SK-N-SH (cell line): ENCODE measurements at regions of chr1 and their contacts with region 1.

Region 1: GRCh38 chr1:119613769-119614720 is 34.0 kb downstream of the ZNF697 start:
- DNase-seq: peak; percentile 75
- H3K4me3 ChIP-seq: no peak overlapping the region
- H3K27ac ChIP-seq: no peak overlapping the region
- H3K4me1 ChIP-seq: peaks cover 0 to 2% of the 10 kb centered on the region in 2 experiments; a peak in 1 of 4 replicates
- H3K27me3 ChIP-seq: no peaks in the 10 kb centered on the region
- CTCF ChIP-seq: peak; percentile 79
- EP300 ChIP-seq: no peak
- RAD21 ChIP-seq: peak; percentile 91

Region 2: DNA sequence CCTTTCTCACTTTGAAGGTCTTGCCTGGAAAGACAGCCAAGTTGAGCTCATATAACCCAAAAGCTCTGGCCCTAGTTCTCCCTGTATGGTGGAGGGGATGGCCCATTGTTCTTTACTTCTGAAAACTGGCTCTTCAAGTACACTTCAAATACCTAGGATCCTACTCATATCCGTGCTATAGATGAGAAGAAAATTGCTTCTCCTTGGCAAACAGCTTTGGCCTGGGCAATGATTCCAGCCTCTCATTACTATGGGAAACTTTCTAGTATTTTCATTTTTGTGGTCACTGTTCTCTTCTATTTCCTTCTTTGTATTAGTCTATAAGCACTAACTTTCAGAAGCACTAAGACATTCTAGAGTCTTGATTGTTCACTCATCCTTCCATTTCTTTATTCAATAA is 19.7 kb before region 1 on chr1:
- CTCF ChIA-PET with region 1: interaction called, 13 read pairs
- POLR2A ChIA-PET with region 1: no interaction called
- DNase-seq: no peak
- H3K4me3 ChIP-seq: no peak overlapping the region
- H3K27ac ChIP-seq: peak overlapping the region in 1 of 2 experiments; percentile 56; a peak in 2 of 4 replicates
- H3K4me1 ChIP-seq: no peaks in the 10 kb centered on the region
- H3K27me3 ChIP-seq: no peaks in the 10 kb centered on the region
- CTCF ChIP-seq: no peak
- EP300 ChIP-seq: no peak
- RAD21 ChIP-seq: no peak

Region 3: GRCh38 chr1:119647734-119648619 is 33.9 kb after region 1 on chr1 and contains the start of gene ZNF697:
- CTCF ChIA-PET with region 1: interaction called, 66 read pairs
- POLR2A ChIA-PET with region 1: interaction called, 3 read pairs
- DNase-seq: peak; percentile 96
- H3K4me3 ChIP-seq: peak within 1 kb of the TSS; percentile 97 to 98
- H3K27ac ChIP-seq: peak within 1 kb of the TSS; percentile 96
- H3K4me1 ChIP-seq: peaks cover 5 to 11% of the 10 kb centered on the region in 2 experiments; a peak in 3 of 4 replicates
- H3K27me3 ChIP-seq: no peaks in the 10 kb centered on the region
- CTCF ChIP-seq: peak; percentile 41; the same call in 1 of the 2 replicates
- EP300 ChIP-seq: no peak
- RAD21 ChIP-seq: peak; percentile 68; the same call in 1 of the 2 replicates
- polyA plus RNA-seq, gene ZNF697: 3.4 and 4.1 TPM in 2 replicates

Region 4: GRCh38 chr1:119662034-119662437 is 48.0 kb after region 1 on chr1:
- CTCF ChIA-PET with region 1: interaction called, 52 read pairs
- POLR2A ChIA-PET with region 1: interaction called, 3 read pairs
- DNase-seq: no peak
- H3K4me3 ChIP-seq: no peak overlapping the region
- H3K27ac ChIP-seq: no peak overlapping the region
- H3K4me1 ChIP-seq: no peaks in the 10 kb centered on the region
- H3K27me3 ChIP-seq: no peaks in the 10 kb centered on the region
- CTCF ChIP-seq: no peak
- EP300 ChIP-seq: no peak
- RAD21 ChIP-seq: no peak

Region 5: GRCh38 chr1:119675349-119676345 is 61.6 kb after region 1 on chr1:
- CTCF ChIA-PET with region 1: interaction called, 102 read pairs
- POLR2A ChIA-PET with region 1: no interaction called
- DNase-seq: peak; percentile 78
- H3K4me3 ChIP-seq: peak overlapping the region; percentile 49 to 50
- H3K27ac ChIP-seq: peak overlapping the region; percentile 54 to 97
- H3K4me1 ChIP-seq: peaks cover 3 to 20% of the 10 kb centered on the region in 2 experiments; a peak in 3 of 4 replicates
- H3K27me3 ChIP-seq: no peaks in the 10 kb centered on the region
- CTCF ChIP-seq: peak; percentile 90
- EP300 ChIP-seq: no peak
- RAD21 ChIP-seq: peak; percentile 67

Region 6: DNA sequence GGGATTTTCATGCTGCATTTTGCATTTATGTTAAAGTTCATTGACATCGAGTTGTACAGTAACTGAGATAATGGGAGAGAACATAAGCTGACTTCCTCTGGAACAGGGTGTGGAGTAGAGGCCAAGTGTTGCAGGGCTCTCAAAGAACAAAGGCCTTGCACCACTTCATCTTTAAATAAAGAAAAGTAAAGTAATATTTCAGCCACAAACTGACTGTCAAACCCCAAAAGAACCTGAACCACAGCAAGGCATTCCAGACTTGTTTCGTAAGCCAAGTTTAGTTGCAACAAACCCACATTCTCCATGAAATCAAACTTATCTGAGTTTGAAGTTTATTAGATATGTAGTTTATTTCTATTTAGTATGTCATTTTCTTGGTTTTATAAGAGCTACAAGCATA is 173.7 kb after region 1 on chr1:
- CTCF ChIA-PET with region 1: no interaction called
- POLR2A ChIA-PET with region 1: no interaction called
- DNase-seq: no peak
- H3K4me3 ChIP-seq: no peak overlapping the region
- H3K27ac ChIP-seq: no peak overlapping the region
- H3K4me1 ChIP-seq: no peaks in the 10 kb centered on the region
- H3K27me3 ChIP-seq: peaks cover 4% of the 10 kb centered on the region; the same call in 1 of the 2 replicates
- CTCF ChIP-seq: no peak
- EP300 ChIP-seq: no peak
- RAD21 ChIP-seq: no peak